OCI-LY7 (cell line): ENCODE measurements at regions of chr13 and their contacts with region 1.

Region 1: GRCh38 chr13:32586080-32586900 is at the start of gene PDS5B:
- DNase-seq: peak; percentile 95
- H3K4me3 ChIP-seq: peak within 1 kb of the TSS; percentile 91
- H3K27ac ChIP-seq: peak within 1 kb of the TSS; percentile 81
- H3K4me1 ChIP-seq: peaks cover 32% of the 10 kb centered on the region
- CTCF ChIP-seq: peak; percentile 84
- total RNA-seq, gene PDS5B: 34.1 and 41.2 TPM in 2 replicates

Region 2: GRCh38 chr13:32548837-32549236 is 37.5 kb before region 1 on chr13:
- CTCF ChIA-PET with region 1: no interaction called
- POLR2A ChIA-PET with region 1: no interaction called
- intact Hi-C with region 1: no loop called
- DNase-seq: no peak
- H3K4me3 ChIP-seq: no peak overlapping the region
- H3K27ac ChIP-seq: no peak overlapping the region
- H3K4me1 ChIP-seq: no peaks in the 10 kb centered on the region
- CTCF ChIP-seq: no peak

Region 3: DNA sequence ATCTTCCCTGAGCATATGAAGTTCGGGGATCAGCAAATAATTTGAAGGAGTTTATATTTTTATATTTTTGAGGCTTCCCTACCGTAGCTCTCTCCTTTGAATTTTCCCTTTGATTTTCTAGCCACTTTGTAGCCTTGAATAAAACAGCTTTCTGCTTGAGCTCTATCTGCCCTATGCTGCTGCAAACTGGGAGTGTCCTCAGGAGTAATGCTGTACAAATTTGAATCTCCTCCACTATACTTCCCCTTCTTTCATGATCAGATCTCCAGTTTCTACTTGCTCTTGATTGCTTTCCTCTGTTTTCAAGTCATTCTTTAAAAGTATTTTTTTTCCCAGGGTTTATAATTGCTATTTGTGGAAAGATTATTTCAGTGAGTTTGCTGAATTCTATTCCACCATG is 14.6 kb after region 1 on chr13:
- CTCF ChIA-PET with region 1: interaction called, 6 read pairs
- POLR2A ChIA-PET with region 1: interaction called, 57 read pairs
- intact Hi-C with region 1: no loop called
- DNase-seq: peak; percentile 56
- H3K4me3 ChIP-seq: peak overlapping the region; percentile 50
- H3K27ac ChIP-seq: peak overlapping the region; percentile 78
- H3K4me1 ChIP-seq: peaks cover 41% of the 10 kb centered on the region
- CTCF ChIP-seq: no peak

Region 4: GRCh38 chr13:32639502-32640105 is 53.3 kb after region 1 on chr13:
- CTCF ChIA-PET with region 1: interaction called, 5 read pairs
- POLR2A ChIA-PET with region 1: interaction called, 7 read pairs
- intact Hi-C with region 1: loop called (anchors 1 kb)
- DNase-seq: peak; percentile 70
- H3K4me3 ChIP-seq: no peak overlapping the region
- H3K27ac ChIP-seq: no peak overlapping the region
- H3K4me1 ChIP-seq: peaks cover 37% of the 10 kb centered on the region
- CTCF ChIP-seq: peak; percentile 98

Region 5: GRCh38 chr13:32650705-32651311 is 64.5 kb after region 1 on chr13:
- CTCF ChIA-PET with region 1: no interaction called
- POLR2A ChIA-PET with region 1: interaction called, 10 read pairs
- intact Hi-C with region 1: loop called (anchors 1 kb)
- DNase-seq: peak; percentile 75
- H3K4me3 ChIP-seq: no peak overlapping the region
- H3K27ac ChIP-seq: no peak overlapping the region
- H3K4me1 ChIP-seq: peaks cover 42% of the 10 kb centered on the region
- CTCF ChIP-seq: peak; percentile 96

Region 6: GRCh38 chr13:32669030-32669646 is 82.8 kb after region 1 on chr13:
- CTCF ChIA-PET with region 1: no interaction called
- POLR2A ChIA-PET with region 1: interaction called, 3 read pairs
- intact Hi-C with region 1: loop called (anchors 1 kb)
- DNase-seq: peak; percentile 79
- H3K4me3 ChIP-seq: no peak overlapping the region
- H3K27ac ChIP-seq: no peak overlapping the region
- H3K4me1 ChIP-seq: no peaks in the 10 kb centered on the region
- CTCF ChIP-seq: peak; percentile 91

Region 7: GRCh38 chr13:32905063-32905863 is 319.0 kb after region 1 on chr13:
- CTCF ChIA-PET with region 1: no interaction called
- POLR2A ChIA-PET with region 1: no interaction called
- intact Hi-C with region 1: loop called (anchors 10 kb)
- DNase-seq: no peak
- H3K4me3 ChIP-seq: no peak overlapping the region
- H3K27ac ChIP-seq: no peak overlapping the region
- H3K4me1 ChIP-seq: no peaks in the 10 kb centered on the region
- CTCF ChIP-seq: no peak

Region 8: GRCh38 chr13:33723772-33724435 is 1137.6 kb after region 1 on chr13:
- CTCF ChIA-PET with region 1: interaction called, 3 read pairs
- POLR2A ChIA-PET with region 1: no interaction called
- intact Hi-C with region 1: loop called (anchors 2 kb)
- DNase-seq: peak; percentile 91
- H3K4me3 ChIP-seq: no peak overlapping the region
- H3K27ac ChIP-seq: peak overlapping the region; percentile 24
- H3K4me1 ChIP-seq: peaks cover 54% of the 10 kb centered on the region
- CTCF ChIP-seq: peak; percentile 91